ENCODE measurements at regions of chr13 and their contacts with region 1.

Region 1: GRCh38 chr13:50911937-50912795 is 2.6 kb downstream of the RNASEH2B start:
- DNase-seq: peak; percentile 92 to 98 (median 98)
- H3K4me3 ChIP-seq: peak overlapping the region in 6 of 7 experiments; percentile 83 to 97 (median 86)
- H3K27ac ChIP-seq: peak overlapping the region; percentile 30 to 95
- H3K4me1 ChIP-seq: peaks cover 45 to 87% (median 69%) of the 10 kb centered on the region in 4 experiments
- H3K27me3 ChIP-seq: no peaks in the 10 kb centered on the region

Region 2: DNA sequence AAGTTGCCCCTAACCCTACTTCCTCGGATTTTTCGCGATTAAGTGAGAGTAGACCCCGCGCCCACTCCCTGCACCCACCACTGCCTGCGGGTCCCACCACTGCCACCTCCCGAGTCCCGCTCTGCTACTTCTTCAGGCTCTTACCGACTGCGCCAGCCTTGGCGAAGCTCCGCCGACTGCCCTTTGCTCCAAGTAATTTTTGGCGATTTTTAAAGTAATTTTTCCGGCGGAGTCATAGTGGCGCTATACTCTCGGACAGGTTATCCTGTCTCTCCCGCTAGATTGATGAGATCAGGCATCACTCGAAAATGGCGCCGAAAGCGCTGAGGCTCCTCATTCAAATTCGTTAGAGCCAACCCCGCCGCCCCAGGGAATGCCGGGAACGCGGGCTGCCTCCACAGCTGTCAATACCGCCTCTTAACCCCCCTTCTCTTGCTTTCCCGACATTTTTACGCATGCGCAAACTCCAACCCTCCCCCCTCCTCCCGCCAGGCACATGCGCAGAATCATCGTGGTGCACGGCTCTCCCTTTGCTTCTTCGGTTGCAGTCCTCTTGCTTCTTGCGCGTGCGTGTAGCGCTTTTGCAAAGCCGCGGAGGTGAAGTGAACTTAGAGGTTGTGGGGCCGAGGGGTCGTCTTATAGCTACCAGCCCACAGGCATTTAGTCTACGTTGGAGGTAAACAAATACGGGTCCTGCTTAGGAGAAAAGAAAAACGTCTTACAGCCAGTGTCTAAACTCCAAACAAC is 830.3 kb before region 1 on chr13:
- CTCF ChIA-PET with region 1: interaction called, 19 read pairs
- POLR2A ChIA-PET with region 1: interaction called, 3 read pairs
- DNase-seq: peak; percentile 99
- H3K4me3 ChIP-seq: peak overlapping the region; percentile 74 to 99 (median 96)
- H3K27ac ChIP-seq: peak overlapping the region; percentile 85 to 92
- H3K4me1 ChIP-seq: peaks cover 15 to 49% (median 31%) of the 10 kb centered on the region in 4 experiments
- H3K27me3 ChIP-seq: no peaks in the 10 kb centered on the region

Region 3: GRCh38 chr13:50801087-50801931 is 110.9 kb before region 1 on chr13:
- CTCF ChIA-PET with region 1: interaction called, 16 read pairs
- POLR2A ChIA-PET with region 1: no interaction called
- DNase-seq: peak; percentile 75 to 92 (median 87)
- H3K4me3 ChIP-seq: no peak overlapping the region
- H3K27ac ChIP-seq: no peak overlapping the region
- H3K4me1 ChIP-seq: peaks cover 12 to 28% (median 19%) of the 10 kb centered on the region in 4 experiments
- H3K27me3 ChIP-seq: no peaks in the 10 kb centered on the region

Region 4: DNA sequence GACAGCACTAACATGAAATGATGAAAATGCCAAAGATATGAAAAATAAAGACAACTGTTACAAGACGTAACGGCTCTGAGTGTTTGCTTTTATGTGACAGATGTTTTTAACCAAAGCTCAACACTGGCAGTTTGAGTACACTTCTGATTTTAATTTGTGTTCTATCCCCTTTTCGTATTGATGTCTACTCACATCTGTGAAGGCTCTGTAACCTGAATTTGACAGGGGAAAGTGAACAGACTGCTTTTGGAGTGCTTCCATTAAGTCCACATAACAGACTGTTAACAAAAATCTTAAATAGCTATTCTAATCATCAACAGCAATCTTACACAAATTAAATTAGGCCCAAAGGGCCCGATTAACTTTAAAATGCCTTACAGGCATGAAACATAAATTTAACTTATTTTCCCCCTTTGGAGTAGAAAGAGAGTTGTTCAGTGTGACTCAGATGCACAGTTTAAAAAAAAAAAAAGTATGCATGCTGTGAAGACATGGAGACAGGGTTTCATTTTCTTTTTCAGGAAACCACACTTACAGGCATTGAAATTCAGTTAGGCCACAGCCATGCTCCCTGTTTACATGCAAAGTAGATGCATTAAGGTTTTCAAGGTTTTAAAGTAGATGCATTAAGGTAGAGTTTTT is 18.8 kb before region 1 on chr13:
- CTCF ChIA-PET with region 1: interaction called, 22 read pairs
- POLR2A ChIA-PET with region 1: interaction called, 3 read pairs
- DNase-seq: peak; percentile 75 to 95 (median 92)
- H3K4me3 ChIP-seq: peak overlapping the region in 2 of 7 experiments; percentile 35 to 55
- H3K27ac ChIP-seq: peak overlapping the region; percentile 78 to 83
- H3K4me1 ChIP-seq: peaks cover 36 to 67% (median 52%) of the 10 kb centered on the region in 4 experiments
- H3K27me3 ChIP-seq: no peaks in the 10 kb centered on the region

Region 5: DNA sequence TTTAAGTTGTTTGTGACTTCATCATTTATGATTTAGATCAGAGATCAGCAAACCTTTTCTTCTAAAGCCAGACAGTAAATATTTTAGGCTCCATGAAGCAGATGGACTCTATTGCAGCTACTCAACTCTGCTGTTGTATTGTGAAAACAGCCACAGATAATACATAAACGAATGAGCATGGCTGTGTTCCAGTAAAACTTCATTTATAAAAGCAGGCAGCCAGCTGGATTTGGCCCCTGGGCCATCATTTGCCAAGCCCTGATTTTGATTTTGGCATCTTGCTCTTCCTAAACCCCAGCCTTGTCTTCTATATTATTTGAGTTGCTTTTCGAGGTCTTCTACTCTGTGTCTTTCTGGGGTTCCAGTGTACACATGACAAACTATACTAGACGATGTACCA is 38.7 kb after region 1 on chr13:
- CTCF ChIA-PET with region 1: no interaction called
- POLR2A ChIA-PET with region 1: no interaction called
- DNase-seq: no peak
- H3K4me3 ChIP-seq: no peak overlapping the region
- H3K27ac ChIP-seq: no peak overlapping the region
- H3K4me1 ChIP-seq: no peaks in the 10 kb centered on the region
- H3K27me3 ChIP-seq: no peaks in the 10 kb centered on the region

Region 6: GRCh38 chr13:51015973-51016372 is 103.8 kb after region 1 on chr13:
- CTCF ChIA-PET with region 1: no interaction called
- POLR2A ChIA-PET with region 1: no interaction called
- DNase-seq: no peak
- H3K4me3 ChIP-seq: no peak overlapping the region
- H3K27ac ChIP-seq: no peak overlapping the region
- H3K4me1 ChIP-seq: no peaks in the 10 kb centered on the region
- H3K27me3 ChIP-seq: no peaks in the 10 kb centered on the region

Region 7: GRCh38 chr13:51070005-51070649 is 158.0 kb after region 1 on chr13:
- CTCF ChIA-PET with region 1: interaction called, 15 read pairs
- POLR2A ChIA-PET with region 1: no interaction called
- DNase-seq: peak; percentile 79 to 86 (median 80)
- H3K4me3 ChIP-seq: no peak overlapping the region
- H3K27ac ChIP-seq: no peak overlapping the region
- H3K4me1 ChIP-seq: peaks cover 8 to 53% (median 37%) of the 10 kb centered on the region in 4 experiments
- H3K27me3 ChIP-seq: no peaks in the 10 kb centered on the region

Region 8: GRCh38 chr13:51122868-51123566 is 210.9 kb after region 1 on chr13:
- CTCF ChIA-PET with region 1: no interaction called
- POLR2A ChIA-PET with region 1: no interaction called
- DNase-seq: peak in 1 of 3 donors; percentile 23
- H3K4me3 ChIP-seq: no peak overlapping the region
- H3K27ac ChIP-seq: no peak overlapping the region
- H3K4me1 ChIP-seq: no peaks in the 10 kb centered on the region
- H3K27me3 ChIP-seq: no peaks in the 10 kb centered on the region

Measured in common myeloid progenitor, CD34-positive (primary cell).